Right ventricle myocardium superior (tissue), 1 donor: ENCODE measurements at regions of chr3 and their contacts with region 1.

Region 1: DNA sequence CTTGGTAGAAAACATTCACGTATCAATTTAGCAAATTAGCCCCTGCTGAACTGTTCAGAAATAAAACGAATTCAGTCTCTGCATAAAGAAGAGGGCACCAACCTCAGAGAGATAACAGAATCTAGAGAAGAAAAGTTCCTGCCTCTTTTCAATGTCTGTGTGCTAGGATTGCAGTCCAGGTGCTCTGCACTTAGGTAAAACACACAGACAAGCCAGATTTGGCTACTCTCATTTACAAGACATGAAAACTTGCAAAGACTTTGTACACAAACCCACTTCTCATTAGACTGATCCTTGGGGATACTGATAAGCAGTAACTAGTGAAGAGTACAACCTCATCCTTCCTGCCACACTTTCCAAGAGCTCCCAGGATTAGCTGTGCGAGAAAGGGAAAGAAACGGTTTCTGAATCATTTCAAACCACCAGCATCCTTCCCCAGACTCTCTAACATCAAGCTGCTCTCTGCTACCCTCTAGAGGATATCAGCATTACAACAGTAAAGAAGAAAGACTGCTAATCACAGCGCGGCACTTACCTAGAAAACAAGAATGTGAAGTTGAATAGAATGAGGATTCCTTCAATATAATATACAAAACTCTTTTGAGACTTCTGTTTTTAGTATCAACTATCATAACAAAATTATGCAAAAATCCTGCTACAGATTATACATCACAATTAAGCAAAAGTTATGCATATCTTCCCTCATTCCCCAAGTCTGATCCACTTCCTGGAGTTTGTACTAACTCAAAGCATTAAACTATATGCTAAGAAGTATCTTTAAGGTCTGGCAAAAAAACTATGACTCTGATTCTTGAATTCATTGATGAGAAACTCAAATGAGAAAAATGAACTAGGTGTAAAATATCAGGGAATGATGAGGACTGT is 306.4 kb downstream of the MAGI1 start:
- DNase-seq: no peak
- ATAC-seq: peak; percentile 80

Region 2: DNA sequence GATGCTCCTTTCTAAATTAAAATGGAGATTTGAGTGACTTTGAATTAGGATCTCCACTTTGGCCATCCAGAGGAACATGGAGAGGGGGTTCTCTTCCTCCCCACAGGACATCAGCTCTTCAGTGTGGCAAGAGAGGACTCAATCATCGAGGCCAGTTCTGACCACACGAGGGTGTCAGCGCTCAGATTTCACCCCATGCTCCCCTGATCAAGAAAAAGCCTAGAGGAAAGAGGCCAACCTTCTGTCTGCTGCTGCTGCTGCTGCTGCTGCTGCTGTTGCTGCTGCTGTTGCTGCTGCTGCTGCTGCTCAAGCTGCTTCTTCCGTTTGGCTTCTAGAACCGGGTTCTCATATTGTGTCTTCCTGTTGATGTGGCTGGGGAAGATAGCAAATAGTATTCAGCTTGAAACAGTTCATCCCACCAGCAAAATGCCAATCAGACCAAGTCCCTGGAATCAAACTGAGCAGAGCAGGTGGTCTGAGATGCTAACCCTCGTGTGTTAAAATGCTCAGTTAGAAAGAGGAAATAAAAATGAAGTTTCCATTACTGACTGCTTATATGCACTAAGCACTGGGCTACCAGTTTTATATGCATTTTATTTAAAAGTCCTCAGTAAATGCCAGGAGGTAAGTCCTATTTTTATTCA is 292.5 kb before region 1 on chr3:
- intact Hi-C with region 1: loop called (anchors 5 kb)
- DNase-seq: peak; percentile 56
- ATAC-seq: peak; percentile 90

Region 3: DNA sequence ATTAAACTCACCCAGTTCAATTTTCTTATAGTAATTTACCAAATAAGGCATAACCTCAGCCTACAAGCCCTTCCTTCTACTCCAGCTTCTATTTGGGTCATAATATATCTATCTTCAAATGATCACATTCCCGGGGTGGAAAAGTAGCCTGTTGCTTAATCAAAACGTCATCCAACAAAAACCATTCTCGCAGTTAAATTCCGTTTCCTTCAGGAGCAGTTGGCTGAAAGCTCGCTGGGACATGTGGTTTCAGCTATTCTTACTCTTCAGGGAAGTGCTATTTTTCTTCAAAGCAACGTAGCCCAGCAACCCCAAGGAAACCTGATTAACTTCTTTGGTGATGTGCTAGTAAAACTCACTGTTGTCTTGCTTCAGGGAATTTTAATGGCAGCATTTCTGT is 246.9 kb after region 1 on chr3:
- intact Hi-C with region 1: no loop called
- DNase-seq: no peak
- ATAC-seq: peak; percentile 38